ENCODE measurements at regions of chr5 and their contacts with region 1.

Region 1: DNA sequence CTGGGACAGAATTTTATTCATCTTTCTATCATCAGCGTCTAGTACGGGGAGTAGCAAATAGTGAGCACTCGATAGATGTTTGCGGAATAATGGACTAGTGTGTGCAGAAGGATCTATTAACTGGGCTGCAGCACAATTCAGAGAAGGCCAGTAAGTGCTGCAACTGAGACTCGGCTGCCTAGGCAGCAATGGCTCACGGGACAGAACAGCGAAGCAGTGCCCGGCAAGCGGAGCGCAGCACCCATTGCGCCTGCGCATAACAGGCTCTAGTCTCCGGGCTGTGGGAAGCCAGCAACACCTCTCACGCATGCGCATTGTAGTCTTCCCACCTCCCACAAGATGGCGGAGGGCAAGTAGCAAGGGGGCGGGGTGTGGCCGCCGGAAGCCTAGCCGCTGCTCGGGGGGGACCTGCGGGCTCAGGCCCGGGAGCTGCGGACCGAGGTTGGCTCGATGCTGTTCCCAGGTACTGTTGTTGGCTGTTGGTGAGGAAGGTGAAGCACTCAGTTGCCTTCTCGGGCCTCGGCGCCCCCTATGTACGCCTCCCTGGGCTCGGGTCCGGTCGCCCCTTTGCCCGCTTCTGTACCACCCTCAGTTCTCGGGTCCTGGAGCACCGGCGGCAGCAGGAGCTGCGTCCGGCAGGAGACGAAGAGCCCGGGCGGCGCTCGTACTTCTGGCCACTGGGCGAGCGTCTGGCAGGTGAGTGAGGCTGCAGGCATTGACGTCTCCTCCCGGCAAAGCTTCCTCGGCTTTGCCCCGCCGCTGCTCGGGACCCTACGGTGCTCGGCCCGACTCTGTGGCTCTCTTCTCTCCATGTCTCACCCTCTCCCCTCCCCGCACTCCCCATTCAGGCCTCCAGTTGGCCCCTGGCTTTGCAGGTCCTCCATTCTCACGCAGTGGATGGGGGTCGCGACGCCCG is 30.2 kb upstream of the APC start:
- DNase-seq: peak; percentile 97
- ATAC-seq: peak; percentile 92
- H3K4me3 ChIP-seq: peak overlapping the region; percentile 85
- H3K27ac ChIP-seq: peak overlapping the region; percentile 79
- H3K4me1 ChIP-seq: peaks cover 3% of the 10 kb centered on the region; the same call in 1 of the 2 replicates
- H3K27me3 ChIP-seq: no peaks in the 10 kb centered on the region
- CTCF ChIP-seq: no peak
- EP300 ChIP-seq: no peak
- POLR2A ChIP-seq: peak; percentile 94
- RAD21 ChIP-seq: no peak

Region 2: GRCh38 chr5:112684737-112685136 is 22.7 kb before region 1 on chr5:
- CTCF ChIA-PET with region 1: interaction called, 9 read pairs
- POLR2A ChIA-PET with region 1: interaction called, 7 read pairs
- RAD21 ChIA-PET with region 1: interaction called, 8 read pairs
- SMC1A ChIA-PET with region 1: interaction called, 20 read pairs
- in situ Hi-C with region 1: no loop called
- intact Hi-C with region 1: no loop called
- DNase-seq: no peak
- ATAC-seq: no peak; the same call in 2 of the 3 replicates
- H3K4me3 ChIP-seq: no peak overlapping the region
- H3K27ac ChIP-seq: no peak overlapping the region
- H3K4me1 ChIP-seq: peaks cover 10% of the 10 kb centered on the region
- H3K27me3 ChIP-seq: peaks cover 0 to 2% of the 10 kb centered on the region in 2 experiments; a peak in 1 of 4 replicates
- CTCF ChIP-seq: no peak
- EP300 ChIP-seq: no peak
- POLR2A ChIP-seq: no peak
- RAD21 ChIP-seq: no peak

Region 3: GRCh38 chr5:112691758-112692157 is 15.7 kb before region 1 on chr5:
- CTCF ChIA-PET with region 1: interaction called, 17 read pairs
- POLR2A ChIA-PET with region 1: interaction called, 5 read pairs
- RAD21 ChIA-PET with region 1: interaction called, 8 read pairs
- SMC1A ChIA-PET with region 1: interaction called, 22 read pairs
- in situ Hi-C with region 1: no loop called
- intact Hi-C with region 1: no loop called
- DNase-seq: peak; percentile 19
- ATAC-seq: peak; percentile 89
- H3K4me3 ChIP-seq: no peak overlapping the region
- H3K27ac ChIP-seq: no peak overlapping the region
- H3K4me1 ChIP-seq: peaks cover 9% of the 10 kb centered on the region
- H3K27me3 ChIP-seq: peaks cover 0 to 1% of the 10 kb centered on the region in 2 experiments; a peak in 2 of 4 replicates
- CTCF ChIP-seq: peak; percentile 46 to 56 (median 50); a peak in 4 of 6 replicates
- EP300 ChIP-seq: no peak
- POLR2A ChIP-seq: no peak
- RAD21 ChIP-seq: peak; percentile 79

Region 4: DNA sequence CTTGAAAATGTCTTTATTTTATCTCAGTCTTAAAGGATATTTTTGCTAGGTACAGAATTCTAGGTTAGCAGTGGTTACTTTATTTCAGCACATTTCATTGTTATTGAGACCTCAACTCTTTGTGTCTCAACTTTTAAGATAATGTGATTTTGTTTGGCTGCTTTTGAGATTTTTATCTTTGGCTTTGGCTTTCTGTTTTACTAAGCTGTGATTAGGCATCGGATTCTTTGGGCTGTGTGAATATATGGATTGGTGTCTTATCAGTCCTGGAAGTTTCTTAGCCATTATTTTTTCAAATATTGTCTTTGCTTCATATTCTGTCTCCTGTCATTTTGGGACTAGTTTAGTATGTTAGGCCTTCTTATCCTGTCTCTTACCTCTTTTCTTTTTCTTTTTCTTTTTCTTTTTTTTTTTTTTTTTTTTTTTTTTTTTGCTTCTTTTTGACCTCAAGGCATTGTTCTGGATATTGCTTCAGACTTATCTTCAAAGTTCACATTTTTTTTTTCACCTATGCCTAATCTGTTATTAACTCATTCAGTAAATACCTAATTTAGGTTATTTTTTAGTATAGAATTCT is 10.1 kb after region 1 on chr5:
- CTCF ChIA-PET with region 1: interaction called, 9 read pairs
- POLR2A ChIA-PET with region 1: interaction called, 7 read pairs
- RAD21 ChIA-PET with region 1: interaction called, 13 read pairs
- SMC1A ChIA-PET with region 1: interaction called, 17 read pairs
- in situ Hi-C with region 1: no loop called
- intact Hi-C with region 1: no loop called
- DNase-seq: no peak
- ATAC-seq: no peak
- H3K4me3 ChIP-seq: no peak overlapping the region
- H3K27ac ChIP-seq: no peak overlapping the region
- H3K4me1 ChIP-seq: no peaks in the 10 kb centered on the region
- H3K27me3 ChIP-seq: no peaks in the 10 kb centered on the region
- CTCF ChIP-seq: no peak
- EP300 ChIP-seq: no peak
- POLR2A ChIP-seq: no peak
- RAD21 ChIP-seq: no peak

Region 5: GRCh38 chr5:112737463-112738190 is 30.2 kb after region 1 on chr5 and contains the start of gene APC:
- CTCF ChIA-PET with region 1: interaction called, 8 read pairs
- POLR2A ChIA-PET with region 1: interaction called, 10 read pairs
- RAD21 ChIA-PET with region 1: interaction called, 7 read pairs
- SMC1A ChIA-PET with region 1: interaction called, 29 read pairs
- in situ Hi-C with region 1: no loop called
- intact Hi-C with region 1: no loop called
- DNase-seq: peak; percentile 46
- ATAC-seq: peak; percentile 99
- H3K4me3 ChIP-seq: peak within 1 kb of the TSS; percentile 99
- H3K27ac ChIP-seq: peak within 1 kb of the TSS; percentile 76
- H3K4me1 ChIP-seq: no peaks in the 10 kb centered on the region
- H3K27me3 ChIP-seq: no peaks in the 10 kb centered on the region
- CTCF ChIP-seq: no peak
- EP300 ChIP-seq: no peak
- POLR2A ChIP-seq: peak; percentile 86
- RAD21 ChIP-seq: no peak
- polyA plus RNA-seq, gene APC: 3.2 to 7.2 TPM

Region 6: DNA sequence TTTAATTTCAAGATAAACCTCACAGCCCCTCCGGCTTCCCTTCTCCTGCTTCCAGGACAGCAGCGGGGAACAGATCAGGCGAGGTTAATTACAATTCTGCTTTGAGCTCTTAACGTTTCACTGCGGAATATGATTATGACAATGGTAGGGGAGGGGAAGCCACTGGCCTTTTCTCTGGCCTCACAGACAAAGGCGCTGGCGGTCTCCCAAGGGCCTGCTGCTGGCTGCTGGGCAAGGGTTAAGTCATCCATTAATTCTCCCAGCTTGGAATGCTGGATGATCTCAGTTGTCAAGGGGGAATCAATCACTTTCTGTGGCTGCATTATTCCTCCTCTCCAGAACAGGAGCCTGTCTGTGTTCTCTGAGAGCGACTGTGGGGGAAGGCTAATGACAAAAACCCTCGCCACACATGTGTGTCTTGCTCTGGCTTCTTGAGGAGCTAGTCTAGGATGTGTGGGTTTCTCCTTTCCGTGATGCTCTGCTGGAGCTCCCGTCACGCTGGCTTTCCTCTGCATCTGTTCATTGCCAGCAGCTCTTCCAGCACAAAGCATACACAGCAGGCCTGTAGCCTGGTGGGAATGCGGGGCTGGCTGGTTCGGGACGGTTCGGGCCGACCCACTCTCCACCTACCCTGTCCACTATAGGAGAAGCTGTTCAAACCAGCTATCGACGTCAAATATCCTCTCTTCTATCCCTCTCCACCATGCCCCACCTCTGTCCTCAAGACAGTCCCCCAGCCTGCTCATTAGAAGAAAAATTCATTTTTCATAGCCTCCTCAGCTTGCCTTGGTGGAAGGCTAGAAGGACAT is 352.0 kb after region 1 on chr5:
- CTCF ChIA-PET with region 1: no interaction called
- POLR2A ChIA-PET with region 1: no interaction called
- RAD21 ChIA-PET with region 1: no interaction called
- SMC1A ChIA-PET with region 1: no interaction called
- in situ Hi-C with region 1: no loop called
- intact Hi-C with region 1: no loop called
- DNase-seq: no peak
- ATAC-seq: no peak
- H3K4me3 ChIP-seq: no peak overlapping the region
- H3K27ac ChIP-seq: no peak overlapping the region
- H3K4me1 ChIP-seq: peaks cover 8% of the 10 kb centered on the region; the same call in 1 of the 2 replicates
- H3K27me3 ChIP-seq: no peaks in the 10 kb centered on the region; a peak in 2 of 4 replicates
- CTCF ChIP-seq: no peak
- EP300 ChIP-seq: no peak
- POLR2A ChIP-seq: no peak
- RAD21 ChIP-seq: no peak

Measured in GM12878 (cell line).